ENCODE measurements at regions of chr10 and their contacts with region 1.

Region 1: GRCh38 chr10:102420810-102421644 is at the start of gene FBXL15:
- DNase-seq: peak; percentile 99
- ATAC-seq: peak; percentile 71
- H3K4me3 ChIP-seq: peak within 1 kb of the TSS; percentile 87 to 94
- H3K27ac ChIP-seq: peak within 1 kb of the TSS; percentile 77
- H3K4me1 ChIP-seq: peaks cover 15 to 33% of the 10 kb centered on the region in 2 experiments; a peak in 3 of 4 replicates
- H3K27me3 ChIP-seq: no peaks in the 10 kb centered on the region
- CTCF ChIP-seq: no peak
- POLR2A ChIP-seq: peak; percentile 20
- RAD21 ChIP-seq: no peak
- total RNA-seq, gene FBXL15: 21.1 TPM

Region 2: DNA sequence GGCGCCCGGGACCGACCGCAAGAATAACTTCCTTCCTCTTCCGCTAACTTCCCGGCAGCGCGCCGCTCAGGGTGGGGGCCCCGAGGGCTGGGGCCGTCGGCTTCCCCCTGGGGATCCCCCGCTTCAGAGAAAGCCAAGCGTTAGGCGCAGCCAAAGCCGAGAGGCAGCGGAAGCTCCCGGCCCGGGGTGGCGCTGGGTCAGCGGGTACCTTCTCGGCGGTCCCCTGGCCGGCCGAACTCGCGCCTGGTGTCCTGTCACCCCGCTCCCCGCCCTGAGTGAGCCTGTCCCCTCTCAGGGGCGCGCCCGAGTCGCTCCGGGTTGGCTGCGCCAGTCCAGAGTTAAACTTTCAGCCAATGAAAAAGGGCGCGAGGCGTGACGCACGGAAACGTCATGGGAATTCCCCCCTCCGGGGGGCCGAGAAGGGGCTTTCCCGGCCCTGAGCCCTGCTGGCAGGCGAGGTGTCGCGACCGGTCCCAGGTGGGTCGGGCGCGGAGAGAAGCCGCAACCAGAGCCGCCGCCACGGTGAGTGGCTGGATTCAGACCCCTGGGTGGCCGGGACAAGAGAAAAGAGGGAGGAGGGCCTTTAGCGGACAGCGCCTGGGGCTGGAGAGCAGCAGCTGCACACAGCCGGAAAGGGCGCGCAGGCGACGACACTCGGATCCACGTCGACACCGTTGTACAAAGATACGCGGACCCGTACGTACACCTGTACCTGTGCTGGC is 26.8 kb before region 1 on chr10:
- CTCF ChIA-PET with region 1: interaction called, 36 read pairs
- POLR2A ChIA-PET with region 1: interaction called, 12 read pairs
- RAD21 ChIA-PET with region 1: interaction called in 1 of 2 experiments, 7 read pairs
- intact Hi-C with region 1: loop called (anchors 1 kb)
- DNase-seq: peak; percentile 95
- ATAC-seq: peak; percentile 88
- H3K4me3 ChIP-seq: peak overlapping the region; percentile 75 to 92
- H3K27ac ChIP-seq: peak overlapping the region; percentile 77
- H3K4me1 ChIP-seq: peaks cover 16 to 58% of the 10 kb centered on the region in 2 experiments
- H3K27me3 ChIP-seq: no peaks in the 10 kb centered on the region
- CTCF ChIP-seq: no peak; a peak in 1 of 6 replicates
- POLR2A ChIP-seq: no peak
- RAD21 ChIP-seq: no peak

Region 3: GRCh38 chr10:102432162-102432950 is 11.3 kb after region 1 on chr10 and contains the start of gene CUEDC2:
- CTCF ChIA-PET with region 1: interaction called, 41 read pairs
- POLR2A ChIA-PET with region 1: interaction called, 47 read pairs
- RAD21 ChIA-PET with region 1: interaction called, 4 to 6 read pairs
- intact Hi-C with region 1: no loop called
- DNase-seq: peak; percentile 98
- ATAC-seq: peak; percentile 95
- H3K4me3 ChIP-seq: peak within 1 kb of the TSS; percentile 90 to 91
- H3K27ac ChIP-seq: peak within 1 kb of the TSS; percentile 84
- H3K4me1 ChIP-seq: peaks cover 0 to 26% of the 10 kb centered on the region in 2 experiments; a peak in 2 of 4 replicates
- H3K27me3 ChIP-seq: peaks cover 7% of the 10 kb centered on the region; the same call in 1 of the 2 replicates
- CTCF ChIP-seq: no peak
- POLR2A ChIP-seq: peak; percentile 84
- RAD21 ChIP-seq: no peak
- total RNA-seq, gene CUEDC2: 96.7 TPM

Region 4: GRCh38 chr10:102461187-102462054 is 40.4 kb after region 1 on chr10:
- CTCF ChIA-PET with region 1: interaction called, 9 read pairs
- POLR2A ChIA-PET with region 1: interaction called, 7 read pairs
- RAD21 ChIA-PET with region 1: no interaction called
- intact Hi-C with region 1: loop called (anchors 5 kb)
- DNase-seq: peak; percentile 87
- ATAC-seq: peak; percentile 85
- H3K4me3 ChIP-seq: peak overlapping the region; percentile 72 to 73
- H3K27ac ChIP-seq: peak overlapping the region; percentile 60
- H3K4me1 ChIP-seq: peaks cover 31 to 38% of the 10 kb centered on the region in 2 experiments
- H3K27me3 ChIP-seq: no peaks in the 10 kb centered on the region
- CTCF ChIP-seq: no peak
- POLR2A ChIP-seq: peak; percentile 80
- RAD21 ChIP-seq: no peak

Region 5: GRCh38 chr10:102503281-102504220 is 82.5 kb after region 1 on chr10 and contains the start of gene SUFU:
- CTCF ChIA-PET with region 1: interaction called, 4 read pairs
- POLR2A ChIA-PET with region 1: no interaction called
- RAD21 ChIA-PET with region 1: interaction called in 1 of 2 experiments, 3 read pairs
- intact Hi-C with region 1: loop called (anchors 2 kb)
- DNase-seq: peak; percentile 100
- ATAC-seq: peak; percentile 72
- H3K4me3 ChIP-seq: peak within 1 kb of the TSS; percentile 83 to 89
- H3K27ac ChIP-seq: peak within 1 kb of the TSS; percentile 59
- H3K4me1 ChIP-seq: peaks cover 13 to 27% of the 10 kb centered on the region in 2 experiments
- H3K27me3 ChIP-seq: no peaks in the 10 kb centered on the region
- CTCF ChIP-seq: peak in 2 of 3 experiments; percentile 94 to 99; a peak in 4 of 6 replicates
- POLR2A ChIP-seq: peak; percentile 53
- RAD21 ChIP-seq: no peak
- total RNA-seq, gene SUFU: 18.8 TPM